Adrenal gland (tissue), 19 donors: ENCODE measurements at regions of chr1 and their contacts with region 1.

Region 1: DNA sequence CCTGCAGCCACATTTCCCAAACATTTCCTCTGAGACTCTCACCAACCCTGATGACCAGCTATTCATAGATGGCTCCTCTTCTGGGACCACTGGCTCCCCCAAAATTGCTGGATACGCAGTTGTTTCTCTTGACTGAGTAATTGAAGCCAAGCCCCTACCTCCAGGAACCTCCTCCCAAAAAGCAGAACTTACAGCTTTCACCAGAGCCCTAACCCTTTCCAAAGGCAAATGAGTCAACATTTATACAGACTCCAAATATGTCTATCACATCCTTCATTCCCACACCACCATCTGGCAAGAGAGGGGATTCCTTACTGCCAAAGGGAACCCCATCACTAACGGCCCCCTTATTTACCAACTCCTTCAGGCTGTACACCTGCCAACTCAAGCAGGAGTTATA is 20.3 kb upstream of the CA6 start:
- DNase-seq: no peak
- H3K4me3 ChIP-seq: no peak overlapping the region
- H3K27ac ChIP-seq: no peak overlapping the region
- H3K4me1 ChIP-seq: no peaks in the 10 kb centered on the region
- H3K27me3 ChIP-seq: no peaks in the 10 kb centered on the region
- CTCF ChIP-seq: no peak
- POLR2A ChIP-seq: no peak

Region 2: DNA sequence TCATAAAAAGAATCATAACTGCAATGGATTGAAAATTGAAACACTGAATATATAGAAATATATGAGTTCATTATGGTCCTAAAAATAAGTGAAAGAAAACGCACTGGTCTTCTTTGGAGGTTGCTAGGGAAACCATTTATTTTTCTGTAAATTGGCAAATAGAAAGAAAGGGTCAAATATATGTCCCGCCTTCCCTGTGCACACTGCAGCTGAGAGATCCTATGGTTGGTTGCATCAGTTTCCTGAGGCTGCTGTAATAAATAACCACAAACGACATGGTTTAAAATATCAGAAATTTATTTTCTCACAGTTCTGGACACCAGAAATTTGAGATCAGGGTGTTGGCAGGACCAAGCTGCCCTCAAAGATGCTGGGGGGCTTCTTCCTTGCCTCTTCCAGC is 55.2 kb after region 1 on chr1:
- intact Hi-C with region 1: loop called (anchors 5 kb)
- DNase-seq: no peak
- H3K4me3 ChIP-seq: no peak overlapping the region
- H3K27ac ChIP-seq: no peak overlapping the region
- H3K4me1 ChIP-seq: no peaks in the 10 kb centered on the region
- H3K27me3 ChIP-seq: no peaks in the 10 kb centered on the region
- CTCF ChIP-seq: no peak
- POLR2A ChIP-seq: no peak

Region 3: DNA sequence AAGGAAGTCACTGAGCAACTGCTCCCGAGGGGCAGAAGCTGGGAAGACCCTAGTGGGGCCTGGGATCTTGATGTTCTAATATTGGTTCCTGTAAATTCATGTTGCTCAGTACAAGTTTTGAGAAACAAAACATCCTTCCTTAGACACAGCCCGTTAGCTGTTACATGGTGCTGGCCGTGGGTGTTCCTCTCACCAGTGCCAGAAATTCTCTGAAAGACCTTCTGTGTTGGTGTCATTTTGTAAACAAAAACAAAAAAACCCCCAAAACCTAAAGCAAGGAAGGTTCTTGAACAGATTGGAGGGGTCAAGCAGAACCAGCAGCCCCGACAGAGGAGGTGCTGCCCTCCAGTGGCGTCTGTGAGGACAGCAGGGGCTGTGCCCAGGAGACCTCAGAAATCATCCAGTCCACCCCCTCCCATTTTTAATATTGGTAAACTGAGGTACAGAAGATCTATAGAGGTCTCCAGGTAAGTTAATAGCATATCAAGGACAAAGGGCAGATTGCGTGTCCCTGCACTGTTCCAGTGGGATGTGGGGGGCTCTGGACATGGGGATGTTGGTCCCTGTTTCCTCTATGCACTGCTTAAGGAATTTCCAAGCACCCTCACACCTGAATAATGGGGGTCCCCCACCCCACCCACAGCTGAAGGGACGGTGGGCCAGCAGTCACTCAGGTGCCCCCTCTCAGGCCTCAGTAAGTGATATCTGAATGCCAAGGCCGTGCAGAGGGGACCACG is 62.6 kb after region 1 on chr1:
- intact Hi-C with region 1: loop called (anchors 5 kb)
- DNase-seq: peak in 6 of 7 donors; percentile 39 to 72 (median 54)
- H3K4me3 ChIP-seq: no peak overlapping the region
- H3K27ac ChIP-seq: no peak overlapping the region
- H3K4me1 ChIP-seq: peaks cover 0 to 7% of the 10 kb centered on the region in 2 donors
- H3K27me3 ChIP-seq: no peaks in the 10 kb centered on the region
- CTCF ChIP-seq: peak; percentile 68 to 92 (median 82)
- POLR2A ChIP-seq: no peak

Region 4: DNA sequence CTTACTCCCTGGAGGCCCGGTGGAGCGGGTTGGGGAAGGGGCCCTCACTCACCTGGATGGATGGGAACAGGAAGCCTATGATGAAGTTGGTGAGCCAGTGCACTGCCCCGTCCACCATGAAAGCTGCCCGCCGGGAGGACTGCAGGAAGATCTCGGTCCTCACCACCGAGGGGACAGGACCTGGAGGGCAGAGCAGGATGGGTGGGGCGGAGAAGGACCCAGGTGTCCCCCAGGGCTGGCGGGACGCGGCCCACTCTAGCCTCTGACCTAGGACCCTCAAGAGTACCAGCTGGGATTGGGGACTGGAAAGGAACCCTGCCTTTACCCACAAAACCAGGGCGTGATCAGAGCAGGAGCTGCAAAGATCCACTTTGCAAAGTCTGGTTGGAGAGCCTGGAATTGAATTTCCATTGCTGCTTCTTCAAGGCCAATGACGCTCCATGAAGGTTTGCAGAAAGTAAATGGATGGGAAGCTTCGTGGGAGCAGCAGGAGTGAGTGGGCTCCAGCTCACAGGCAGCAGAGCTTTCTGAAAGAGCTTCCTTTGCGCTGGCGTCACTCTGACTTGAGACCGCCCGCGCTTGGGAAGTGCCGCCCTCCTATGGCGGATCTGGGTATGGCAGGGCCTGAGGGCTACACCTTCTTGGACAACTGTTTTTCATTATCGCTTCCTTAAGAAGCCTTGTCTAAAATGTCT is 79.4 kb after region 1 on chr1:
- intact Hi-C with region 1: loop called in 1 of 2 experiments (anchors 5 kb)
- DNase-seq: peak; percentile 65 to 87 (median 82)
- H3K4me3 ChIP-seq: no peak overlapping the region
- H3K27ac ChIP-seq: no peak overlapping the region
- H3K4me1 ChIP-seq: no peaks in the 10 kb centered on the region
- H3K27me3 ChIP-seq: no peaks in the 10 kb centered on the region
- CTCF ChIP-seq: peak; percentile 74 to 95 (median 84)
- POLR2A ChIP-seq: no peak

Region 5: DNA sequence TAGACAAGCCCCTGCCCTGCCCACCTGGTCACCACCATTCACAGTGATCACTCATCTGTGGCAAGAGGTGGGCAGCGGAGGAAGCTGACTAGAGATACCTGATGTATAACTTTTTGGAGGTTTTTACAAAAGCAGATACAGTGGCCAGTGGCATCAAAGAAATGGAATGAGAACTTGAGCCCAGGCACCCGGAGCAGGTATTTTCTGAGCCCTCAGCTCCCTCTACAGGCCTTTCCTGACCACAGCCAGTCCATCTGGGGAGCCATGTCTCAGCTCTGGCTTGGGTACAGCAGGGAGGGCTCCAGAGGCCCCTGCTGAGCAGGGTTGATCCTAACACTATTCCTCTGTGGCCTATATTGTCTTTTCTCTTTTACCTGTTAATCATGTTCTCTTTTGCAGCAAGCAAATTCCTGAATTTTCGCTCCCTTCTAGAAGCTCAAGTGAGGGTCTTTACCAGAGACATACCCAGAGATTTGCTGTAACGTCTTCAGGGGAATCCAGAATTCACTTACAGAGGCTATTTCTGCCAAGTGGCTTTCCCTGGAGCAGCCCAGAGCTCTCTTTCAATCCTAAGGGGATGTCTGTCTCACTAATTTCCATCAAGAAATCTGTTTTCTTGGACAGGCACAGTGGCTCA is 176.2 kb after region 1 on chr1:
- intact Hi-C with region 1: loop called in 1 of 2 experiments (anchors 10 kb)
- DNase-seq: peak in 5 of 7 donors; percentile 40 to 66 (median 50)
- H3K4me3 ChIP-seq: no peak overlapping the region
- H3K27ac ChIP-seq: no peak overlapping the region
- H3K4me1 ChIP-seq: no peaks in the 10 kb centered on the region
- H3K27me3 ChIP-seq: no peaks in the 10 kb centered on the region
- CTCF ChIP-seq: peak; percentile 13 to 61 (median 44)
- POLR2A ChIP-seq: no peak

Region 6: GRCh38 chr1:9249534-9250410 is 324.4 kb after region 1 on chr1:
- intact Hi-C with region 1: no loop called
- DNase-seq: peak; percentile 72 to 95 (median 91)
- H3K4me3 ChIP-seq: no peak overlapping the region
- H3K27ac ChIP-seq: peak overlapping the region; percentile 84 to 96 (median 87)
- H3K4me1 ChIP-seq: peaks cover 72 to 95% of the 10 kb centered on the region in 2 donors
- H3K27me3 ChIP-seq: no peaks in the 10 kb centered on the region
- CTCF ChIP-seq: peak; percentile 20 to 67 (median 52)
- POLR2A ChIP-seq: peak; percentile 16 to 80